Vagina (tissue), 2 donors: ENCODE measurements at regions of chr1 and their contacts with region 1.

Region 1: DNA sequence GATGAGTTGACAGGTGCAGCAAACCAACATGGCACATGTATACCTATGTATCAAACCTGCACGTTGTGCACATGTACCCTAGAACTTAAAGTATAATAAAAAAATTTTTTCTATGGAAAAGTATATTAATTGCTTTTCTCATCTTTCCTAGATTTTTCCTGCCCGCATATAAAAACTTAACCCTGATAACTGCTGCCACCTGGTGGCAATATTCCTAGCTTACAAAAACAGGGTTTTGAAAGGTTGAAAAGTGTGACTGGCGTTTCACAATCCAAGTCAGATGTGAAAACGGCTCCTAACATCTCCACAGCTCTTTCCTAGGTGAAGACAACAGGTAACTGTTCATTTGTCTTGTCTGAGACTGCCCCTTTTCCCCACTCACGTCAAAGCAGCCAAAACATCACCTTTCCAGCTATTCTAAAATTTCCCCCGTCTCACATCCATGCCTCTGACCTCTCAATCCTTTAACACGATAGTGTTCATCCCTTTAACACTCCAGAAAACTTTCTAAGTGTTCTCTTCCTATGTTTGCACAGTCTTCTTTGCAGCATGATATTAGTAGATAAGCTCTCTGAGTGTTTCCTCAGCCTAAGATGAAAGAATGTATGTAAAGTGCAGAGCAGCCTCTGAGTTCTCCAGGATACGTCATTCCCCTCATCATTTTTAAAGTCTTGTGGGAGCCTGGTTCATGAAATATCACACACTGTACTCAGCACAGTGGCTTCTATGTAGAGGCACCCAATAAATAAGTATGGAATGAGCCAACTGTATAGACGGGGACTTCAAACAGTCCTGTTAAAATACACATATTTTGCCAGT is 27.5 kb downstream of the OVGP1 start:
- DNase-seq: peak in 1 of 2 donors; percentile 52
- H3K4me3 ChIP-seq: no peak overlapping the region
- H3K27ac ChIP-seq: no peak overlapping the region
- H3K4me1 ChIP-seq: no peaks in the 10 kb centered on the region
- H3K27me3 ChIP-seq: no peaks in the 10 kb centered on the region
- CTCF ChIP-seq: peak; percentile 39 to 82 (median 56)
- POLR2A ChIP-seq: no peak

Region 2: DNA sequence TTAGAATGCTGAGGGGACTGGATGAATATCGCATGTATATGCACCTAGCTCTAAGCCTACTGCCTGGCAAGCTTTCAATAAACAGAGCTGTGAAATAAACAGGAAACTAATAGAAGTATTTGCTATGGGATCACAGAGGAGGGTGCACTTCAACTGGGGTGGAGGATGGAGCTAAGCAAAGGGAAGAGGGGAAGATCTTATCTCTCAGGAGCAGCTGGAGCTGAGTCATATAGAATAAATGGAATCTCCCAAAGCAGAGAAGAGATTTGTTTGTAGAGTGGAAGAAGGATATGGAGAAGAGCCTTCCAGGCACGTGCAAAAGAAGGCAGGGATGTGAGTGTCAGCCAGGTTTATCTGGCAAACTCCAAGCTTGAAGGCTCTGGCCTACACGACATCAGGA is 864.0 kb before region 1 on chr1:
- intact Hi-C with region 1: no loop called
- DNase-seq: no peak
- H3K4me3 ChIP-seq: no peak overlapping the region
- H3K27ac ChIP-seq: no peak overlapping the region
- H3K4me1 ChIP-seq: no peaks in the 10 kb centered on the region
- H3K27me3 ChIP-seq: no peaks in the 10 kb centered on the region
- CTCF ChIP-seq: no peak
- POLR2A ChIP-seq: no peak

Region 3: DNA sequence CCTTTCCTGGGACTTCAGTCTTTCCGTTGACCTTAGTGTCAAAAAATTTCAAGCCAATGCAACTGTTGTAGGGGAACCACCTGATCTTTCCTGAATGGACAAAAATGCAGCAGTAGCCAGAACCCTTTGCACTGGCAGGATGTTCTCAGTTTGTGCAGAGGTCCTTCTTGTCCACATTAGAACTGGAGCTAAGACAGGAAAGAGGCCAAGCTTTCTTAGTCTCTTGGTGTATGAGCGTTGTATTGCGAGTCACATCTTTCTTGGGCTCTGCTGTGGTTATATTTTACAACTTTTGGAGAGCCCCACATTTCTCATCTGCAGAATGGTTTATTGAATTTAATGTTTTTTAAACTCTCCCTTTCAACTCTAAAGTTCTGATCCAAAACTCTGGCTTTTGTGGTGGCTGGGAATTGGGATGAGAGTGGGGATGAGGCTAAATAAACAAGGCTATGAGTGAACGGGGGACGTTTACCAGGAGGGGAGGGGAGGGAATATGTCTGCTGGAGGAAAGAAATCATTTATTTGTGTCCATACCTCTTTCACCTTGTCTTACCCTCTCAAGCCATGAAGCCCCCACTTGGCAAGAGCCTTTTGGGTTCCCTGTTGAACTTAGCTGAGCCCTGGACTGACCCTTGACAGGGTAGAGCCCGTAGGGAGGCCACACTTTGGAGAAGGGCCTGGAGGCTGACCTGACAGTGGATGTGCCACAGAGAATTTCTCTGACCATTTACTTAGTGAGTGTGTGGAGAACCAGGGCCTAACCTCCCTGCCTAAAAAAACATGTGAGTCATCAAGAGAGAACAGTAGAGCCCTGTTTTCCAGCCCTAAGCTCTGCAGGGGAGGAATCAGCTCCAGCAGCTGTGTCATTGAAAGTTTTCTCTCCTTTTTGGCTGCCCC is 171.9 kb before region 1 on chr1:
- intact Hi-C with region 1: loop called (anchors 5 kb)
- DNase-seq: peak in 1 of 2 donors; percentile 88
- H3K4me3 ChIP-seq: no peak overlapping the region
- H3K27ac ChIP-seq: peak overlapping the region; percentile 51
- H3K4me1 ChIP-seq: no peaks in the 10 kb centered on the region
- H3K27me3 ChIP-seq: no peaks in the 10 kb centered on the region
- CTCF ChIP-seq: no peak
- POLR2A ChIP-seq: no peak

Region 4: DNA sequence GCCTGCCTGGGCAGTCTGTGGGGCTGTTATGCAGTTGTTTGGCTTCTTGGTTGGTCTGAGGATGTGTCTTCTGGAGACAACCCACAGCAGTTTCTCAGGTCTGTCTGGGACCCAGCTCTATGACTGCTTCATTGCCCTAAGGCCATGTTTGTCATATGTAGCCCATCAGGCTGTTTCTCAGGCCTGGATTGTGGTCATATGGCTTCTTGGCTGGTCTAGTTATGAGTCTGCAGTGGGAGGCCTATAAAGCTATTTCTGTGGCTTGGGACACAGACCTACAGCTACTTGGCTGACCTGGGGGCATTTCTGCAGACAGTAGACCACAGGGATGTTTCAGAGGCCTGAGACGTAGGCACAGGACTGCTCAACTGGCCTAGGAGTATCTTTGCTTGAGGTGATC is 67.8 kb before region 1 on chr1:
- intact Hi-C with region 1: no loop called
- DNase-seq: no peak
- H3K4me3 ChIP-seq: no peak overlapping the region
- H3K27ac ChIP-seq: no peak overlapping the region
- H3K4me1 ChIP-seq: no peaks in the 10 kb centered on the region
- H3K27me3 ChIP-seq: no peaks in the 10 kb centered on the region
- CTCF ChIP-seq: no peak
- POLR2A ChIP-seq: no peak

Region 5: GRCh38 chr1:111342471-111342870 is 57.5 kb before region 1 on chr1:
- intact Hi-C with region 1: loop called (anchors 2 kb)
- DNase-seq: no peak
- H3K4me3 ChIP-seq: no peak overlapping the region
- H3K27ac ChIP-seq: no peak overlapping the region
- H3K4me1 ChIP-seq: peaks cover 9% of the 10 kb centered on the region
- H3K27me3 ChIP-seq: no peaks in the 10 kb centered on the region
- CTCF ChIP-seq: no peak
- POLR2A ChIP-seq: no peak

Region 6: GRCh38 chr1:111592389-111593361 is 192.7 kb after region 1 on chr1:
- intact Hi-C with region 1: no loop called
- DNase-seq: peak in 1 of 2 donors; percentile 92
- H3K4me3 ChIP-seq: no peak overlapping the region
- H3K27ac ChIP-seq: peak overlapping the region; percentile 78
- H3K4me1 ChIP-seq: peaks cover 55% of the 10 kb centered on the region
- H3K27me3 ChIP-seq: no peaks in the 10 kb centered on the region
- CTCF ChIP-seq: no peak
- POLR2A ChIP-seq: no peak